Caco-2 (cell line): ENCODE measurements at regions of chr6 and their contacts with region 1.

Region 1: GRCh38 chr6:66986928-66987327 is 1279.9 kb upstream of the EYS start:
- DNase-seq: peak; percentile 61 to 72
- H3K4me3 ChIP-seq: no peak overlapping the region
- H3K4me3 Mint-ChIP-seq: peak overlapping the region; percentile 49
- H3K27ac Mint-ChIP-seq: peak overlapping the region; percentile 85
- H3K4me1 ChIP-seq: peaks cover 13% of the 10 kb centered on the region
- H3K4me1 Mint-ChIP-seq: peaks cover 14% of the 10 kb centered on the region
- H3K27me3 ChIP-seq: no peaks in the 10 kb centered on the region
- H3K27me3 Mint-ChIP-seq: no peaks in the 10 kb centered on the region
- CTCF ChIP-seq: no peak

Region 2: GRCh38 chr6:67009818-67010217 is 22.9 kb after region 1 on chr6:
- CTCF ChIA-PET with region 1: no interaction called
- POLR2A ChIA-PET with region 1: no interaction called
- intact Hi-C with region 1: loop called (anchors 1 kb)
- DNase-seq: peak; percentile 38 to 43
- H3K4me3 ChIP-seq: no peak overlapping the region
- H3K4me3 Mint-ChIP-seq: no peak overlapping the region
- H3K27ac Mint-ChIP-seq: peak overlapping the region; percentile 33
- H3K4me1 ChIP-seq: no peaks in the 10 kb centered on the region; the same call in 1 of the 2 replicates
- H3K4me1 Mint-ChIP-seq: peaks cover 8% of the 10 kb centered on the region
- H3K27me3 ChIP-seq: no peaks in the 10 kb centered on the region
- H3K27me3 Mint-ChIP-seq: no peaks in the 10 kb centered on the region
- CTCF ChIP-seq: peak; percentile 33 to 36